A549 (cell line): ENCODE measurements at regions of chr2 and their contacts with region 1.

Region 1: DNA sequence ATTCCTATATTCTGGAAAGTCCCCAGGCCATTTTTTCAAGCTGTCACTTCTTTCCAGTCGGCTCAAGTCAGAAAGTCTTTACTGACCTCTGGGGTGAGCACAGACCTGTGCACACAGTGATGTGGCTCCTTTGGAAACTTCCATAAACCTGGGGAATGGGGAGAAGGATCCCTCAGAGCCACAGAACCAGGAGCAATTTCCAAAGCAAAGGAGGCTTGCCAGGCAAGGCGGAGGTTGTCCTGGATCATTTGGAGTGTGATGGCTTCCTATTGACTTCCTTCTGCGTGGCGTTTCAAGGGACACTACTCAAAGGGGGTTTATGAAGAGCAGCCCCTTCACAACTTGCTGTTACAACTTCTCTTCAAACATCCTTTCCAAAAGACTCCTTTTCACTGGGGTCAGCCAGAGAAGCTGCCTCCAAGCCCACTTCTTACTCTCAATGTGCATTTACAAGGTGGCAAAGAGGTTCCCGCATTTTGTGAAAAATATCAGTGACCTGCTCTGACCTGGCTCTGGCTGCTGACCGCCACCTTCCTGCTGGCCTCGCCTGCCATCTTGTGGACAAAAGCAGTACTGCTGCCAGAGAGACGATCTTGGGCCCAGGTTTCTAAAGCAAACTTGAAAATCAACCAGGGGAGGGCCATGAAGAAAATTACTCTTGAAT is 18.2 kb upstream of the TMEM247 start:
- DNase-seq: peak; percentile 66 to 76
- ATAC-seq: peak; percentile 40 to 78; a peak in 4 of 6 replicates
- H3K4me3 ChIP-seq: no peak overlapping the region
- H3K27ac ChIP-seq: peak overlapping the region; percentile 29 to 79
- H3K4me1 ChIP-seq: peaks cover 16% of the 10 kb centered on the region
- CTCF ChIP-seq: peak; percentile 98
- EP300 ChIP-seq: no peak
- POLR2A ChIP-seq: no peak
- RAD21 ChIP-seq: peak; percentile 100

Region 2: DNA sequence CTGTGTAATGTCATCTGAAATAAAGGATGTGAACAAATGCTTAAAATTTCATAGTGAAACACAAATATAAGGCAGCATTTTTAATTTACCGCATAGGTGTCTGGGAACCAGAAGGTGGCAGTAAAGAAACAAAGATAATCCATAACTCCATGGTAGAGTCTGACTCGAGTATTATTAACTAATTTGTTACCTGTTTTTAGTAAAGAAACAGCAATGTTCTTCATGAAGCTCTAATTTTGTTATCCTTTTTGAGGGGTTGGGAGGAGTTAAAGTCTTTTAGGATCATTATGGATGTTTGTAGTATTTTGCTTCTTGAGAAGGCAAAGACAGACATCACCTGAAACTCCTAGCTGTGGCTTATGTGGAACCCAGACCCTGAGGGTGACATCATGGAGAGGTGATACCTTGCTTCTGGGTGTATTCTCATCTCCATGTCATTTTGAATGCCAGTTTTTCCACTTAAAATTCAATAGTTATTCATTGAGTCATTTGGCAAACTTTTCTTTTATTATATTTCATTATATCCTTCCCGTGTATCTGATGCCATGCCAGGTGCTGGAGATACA is 450.1 kb before region 1 on chr2:
- CTCF ChIA-PET with region 1: interaction called, 19 read pairs
- POLR2A ChIA-PET with region 1: no interaction called
- DNase-seq: peak; percentile 62 to 72
- ATAC-seq: peak; percentile 73 to 92; a peak in 5 of 6 replicates
- H3K4me3 ChIP-seq: no peak overlapping the region
- H3K27ac ChIP-seq: peak overlapping the region; percentile 12 to 56; a peak in 4 of 6 replicates
- H3K4me1 ChIP-seq: peaks cover 19% of the 10 kb centered on the region
- CTCF ChIP-seq: peak; percentile 96
- EP300 ChIP-seq: no peak
- POLR2A ChIP-seq: no peak
- RAD21 ChIP-seq: peak; percentile 94 to 98

Region 3: GRCh38 chr2:46364797-46365457 is 96.2 kb before region 1 on chr2:
- CTCF ChIA-PET with region 1: interaction called, 19 read pairs
- POLR2A ChIA-PET with region 1: no interaction called
- DNase-seq: peak; percentile 50 to 71
- ATAC-seq: peak in 1 of 2 experiments; percentile 70; a peak in 3 of 6 replicates
- H3K4me3 ChIP-seq: no peak overlapping the region
- H3K27ac ChIP-seq: peak overlapping the region in 1 of 2 experiments; percentile 60; a peak in 2 of 6 replicates
- H3K4me1 ChIP-seq: peaks cover 27% of the 10 kb centered on the region
- CTCF ChIP-seq: peak; percentile 94
- EP300 ChIP-seq: no peak
- POLR2A ChIP-seq: no peak
- RAD21 ChIP-seq: peak; percentile 94 to 96

Region 4: GRCh38 chr2:46439582-46439981 is 21.6 kb before region 1 on chr2:
- CTCF ChIA-PET with region 1: interaction called, 13 read pairs
- POLR2A ChIA-PET with region 1: no interaction called
- DNase-seq: no peak
- ATAC-seq: no peak
- H3K4me3 ChIP-seq: no peak overlapping the region
- H3K27ac ChIP-seq: no peak overlapping the region
- H3K4me1 ChIP-seq: no peaks in the 10 kb centered on the region; the same call in 2 of the 3 replicates
- CTCF ChIP-seq: no peak
- EP300 ChIP-seq: no peak
- POLR2A ChIP-seq: no peak
- RAD21 ChIP-seq: no peak